Posterior cingulate gyrus (tissue), 11 donors: ENCODE measurements at regions of chr10 and their contacts with region 1.

Region 1: GRCh38 chr10:72223743-72224101 is 7.6 kb upstream of the ASCC1 start:
- DNase-seq: peak in 1 of 10 donors; percentile 30

Region 2: GRCh38 chr10:71893920-71894319 is 329.8 kb before region 1 on chr10:
- intact Hi-C with region 1: loop called (anchors 2 kb)
- DNase-seq: peak in 2 of 10 donors; percentile 19 to 61

Region 3: GRCh38 chr10:72069751-72070526 is 153.8 kb before region 1 on chr10:
- intact Hi-C with region 1: no loop called
- DNase-seq: peak in 2 of 10 donors; percentile 46 to 70

Region 4: GRCh38 chr10:72133517-72133916 is 90.2 kb before region 1 on chr10:
- intact Hi-C with region 1: loop called (anchors 5 kb)
- DNase-seq: no peak